ENCODE measurements at regions of chr1 and their contacts with region 1.

Region 1: GRCh38 chr1:224454397-224455066 is 19.9 kb upstream of the WDR26 start:
- DNase-seq: no peak
- ATAC-seq: no peak

Region 2: GRCh38 chr1:224058303-224058702 is 396.2 kb before region 1 on chr1:
- intact Hi-C with region 1: no loop called
- DNase-seq: no peak
- ATAC-seq: no peak

Region 3: GRCh38 chr1:224116131-224116530 is 338.4 kb before region 1 on chr1:
- intact Hi-C with region 1: loop called (anchors 5 kb)
- DNase-seq: no peak
- ATAC-seq: peak; percentile 36

Region 4: GRCh38 chr1:224377676-224378006 is 76.9 kb before region 1 on chr1:
- intact Hi-C with region 1: no loop called
- DNase-seq: no peak
- ATAC-seq: peak; percentile 62

Measured in Right ventricle myocardium superior (tissue), 1 donor.